ENCODE measurements at regions of chr19 and their contacts with region 1.

Region 1: DNA sequence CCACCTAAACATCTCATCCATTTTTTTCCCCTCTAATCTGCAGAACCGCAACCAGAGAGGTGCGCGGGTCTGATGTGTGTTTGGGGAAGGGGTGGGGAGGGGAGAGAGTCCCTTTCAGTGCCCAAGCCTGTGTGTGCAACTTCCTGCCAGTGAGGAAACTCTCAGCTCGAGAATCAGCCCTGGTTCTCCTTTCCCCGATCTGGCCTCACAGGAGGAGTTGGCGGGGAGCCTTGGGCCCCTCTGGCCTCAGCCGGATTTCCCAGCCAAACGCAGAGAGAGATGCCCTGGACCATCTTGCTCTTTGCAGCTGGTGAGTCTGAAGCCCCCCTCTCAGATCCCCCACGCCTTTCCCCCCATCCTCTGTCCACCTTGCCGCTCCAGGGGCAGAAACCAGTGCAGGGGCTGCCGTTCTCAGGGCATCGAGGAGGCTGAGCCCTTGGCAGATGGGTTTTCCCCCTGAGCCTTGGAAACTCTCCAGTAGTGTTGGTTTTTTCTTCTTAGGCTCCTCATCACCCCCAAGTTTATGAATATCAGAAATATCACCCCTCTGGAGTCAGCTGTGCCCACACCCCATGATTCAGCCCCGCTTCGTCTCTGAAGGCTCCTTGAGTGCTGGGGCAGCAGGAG is at the start of gene C19orf38:
- DNase-seq: no peak
- ATAC-seq: peak in 3 of 8 donors; percentile 37 to 55 (median 49)
- H3K4me3 ChIP-seq: peak within 1 kb of the TSS in 2 of 10 donors; percentile 1 to 40
- H3K27ac ChIP-seq: peak within 1 kb of the TSS in 2 of 10 donors; percentile 29 to 78
- H3K4me1 ChIP-seq: peaks cover 0 to 3% (median 0%) of the 10 kb centered on the region in 9 donors
- H3K27me3 ChIP-seq: peaks cover 0 to 7% (median 3%) of the 10 kb centered on the region in 7 donors
- CTCF ChIP-seq: no peak
- total RNA-seq, gene C19orf38: 0.27 to 4.0 (median 0.61) TPM in 9 of 10 donors, not detected in the other

Region 2: GRCh38 chr19:10780368-10780767 is 68.0 kb before region 1 on chr19:
- intact Hi-C with region 1: loop called in 2 of 10 experiments (anchors 2 to 10 kb)
- DNase-seq: peak in 1 of 2 donors; percentile 72
- ATAC-seq: peak; percentile 41 to 90 (median 70)
- H3K4me3 ChIP-seq: no peak overlapping the region
- H3K27ac ChIP-seq: peak overlapping the region; percentile 27 to 95 (median 77)
- H3K4me1 ChIP-seq: peaks cover 0 to 85% (median 31%) of the 10 kb centered on the region in 9 donors
- H3K27me3 ChIP-seq: no peaks in the 10 kb centered on the region
- CTCF ChIP-seq: no peak

Region 3: DNA sequence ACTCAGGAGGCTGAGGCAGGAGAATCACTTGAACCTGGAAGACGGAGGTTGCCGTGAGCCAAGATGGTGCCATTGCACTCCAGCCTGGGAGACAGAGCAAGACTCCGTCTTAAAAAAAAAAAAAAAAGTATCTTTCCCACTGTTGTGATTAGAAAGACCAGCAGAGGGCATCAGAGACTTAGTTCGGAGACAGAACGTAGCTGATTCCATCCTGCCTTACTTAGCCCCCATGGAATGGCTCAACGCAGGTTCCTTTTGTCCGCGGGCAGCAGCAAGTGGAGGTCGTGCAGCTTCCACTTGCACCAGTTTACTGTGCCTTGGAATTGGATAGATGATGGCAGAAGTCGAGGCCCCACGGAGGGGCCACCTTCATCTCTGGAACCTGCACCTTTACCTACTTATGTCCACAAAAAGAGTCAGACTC is 88.3 kb after region 1 on chr19:
- intact Hi-C with region 1: no loop called
- DNase-seq: peak in 1 of 2 donors; percentile 61
- ATAC-seq: peak; percentile 69 to 87 (median 77)
- H3K4me3 ChIP-seq: peak overlapping the region in 2 of 10 donors; percentile 10 to 28
- H3K27ac ChIP-seq: peak overlapping the region in 1 of 10 donors; percentile 39
- H3K4me1 ChIP-seq: peaks cover 0 to 9% (median 3%) of the 10 kb centered on the region in 9 donors
- H3K27me3 ChIP-seq: no peaks in the 10 kb centered on the region
- CTCF ChIP-seq: peak; percentile 32 to 70 (median 62)

Measured in heart right ventricle (tissue), 16 donors.